PC-9 (cell line): ENCODE measurements at regions of chr6 and their contacts with region 1.

Region 1: DNA sequence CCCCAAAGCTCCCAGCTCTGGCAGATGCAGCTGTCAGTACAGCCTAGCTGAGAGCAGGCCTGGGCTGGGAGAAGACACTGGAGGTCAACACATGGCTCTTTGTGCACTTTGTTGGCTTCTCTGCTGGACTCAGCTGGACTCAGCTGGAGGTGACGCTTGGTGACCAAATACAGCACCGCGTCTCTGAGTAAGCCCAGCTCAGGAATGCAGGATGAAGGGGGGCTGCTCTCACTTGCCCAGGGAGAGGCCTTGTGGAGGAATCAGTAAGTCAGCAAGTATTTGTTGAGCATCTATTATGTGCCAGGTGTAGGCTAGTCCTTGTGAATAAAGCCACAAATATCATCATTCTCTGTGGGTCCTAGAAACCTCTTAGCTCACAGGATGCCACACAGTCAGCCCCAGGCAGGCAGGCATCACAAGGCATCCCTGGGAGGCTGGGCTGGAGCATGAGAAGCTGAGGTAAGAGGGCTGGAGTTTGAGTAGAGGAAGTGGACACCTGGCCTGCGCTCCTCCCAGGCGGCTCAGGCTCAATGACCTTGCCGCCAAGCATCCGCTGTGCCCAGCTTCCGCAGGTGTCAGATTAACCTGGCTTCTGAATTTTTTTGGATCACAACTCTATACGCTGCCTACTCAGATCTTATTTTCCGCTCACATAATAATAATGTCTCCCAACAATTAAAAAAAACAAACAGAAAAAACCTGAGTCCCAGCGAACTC is 95.4 kb downstream of the TMEM170B start:
- DNase-seq: peak in 1 of 2 experiments; percentile 40
- H3K4me3 ChIP-seq: no peak overlapping the region
- H3K27ac ChIP-seq: peak overlapping the region; percentile 18
- H3K4me1 ChIP-seq: peaks cover 9% of the 10 kb centered on the region
- H3K27me3 ChIP-seq: no peaks in the 10 kb centered on the region
- CTCF ChIP-seq: no peak

Region 2: GRCh38 chr6:11598684-11599083 is 34.3 kb before region 1 on chr6:
- CTCF ChIA-PET with region 1: interaction called, 3 read pairs
- POLR2A ChIA-PET with region 1: no interaction called
- intact Hi-C with region 1: loop called (anchors 1 kb)
- DNase-seq: peak; percentile 66 to 98
- H3K4me3 ChIP-seq: no peak overlapping the region
- H3K27ac ChIP-seq: peak overlapping the region; percentile 26
- H3K4me1 ChIP-seq: peaks cover 39% of the 10 kb centered on the region
- H3K27me3 ChIP-seq: no peaks in the 10 kb centered on the region
- CTCF ChIP-seq: no peak

Region 3: DNA sequence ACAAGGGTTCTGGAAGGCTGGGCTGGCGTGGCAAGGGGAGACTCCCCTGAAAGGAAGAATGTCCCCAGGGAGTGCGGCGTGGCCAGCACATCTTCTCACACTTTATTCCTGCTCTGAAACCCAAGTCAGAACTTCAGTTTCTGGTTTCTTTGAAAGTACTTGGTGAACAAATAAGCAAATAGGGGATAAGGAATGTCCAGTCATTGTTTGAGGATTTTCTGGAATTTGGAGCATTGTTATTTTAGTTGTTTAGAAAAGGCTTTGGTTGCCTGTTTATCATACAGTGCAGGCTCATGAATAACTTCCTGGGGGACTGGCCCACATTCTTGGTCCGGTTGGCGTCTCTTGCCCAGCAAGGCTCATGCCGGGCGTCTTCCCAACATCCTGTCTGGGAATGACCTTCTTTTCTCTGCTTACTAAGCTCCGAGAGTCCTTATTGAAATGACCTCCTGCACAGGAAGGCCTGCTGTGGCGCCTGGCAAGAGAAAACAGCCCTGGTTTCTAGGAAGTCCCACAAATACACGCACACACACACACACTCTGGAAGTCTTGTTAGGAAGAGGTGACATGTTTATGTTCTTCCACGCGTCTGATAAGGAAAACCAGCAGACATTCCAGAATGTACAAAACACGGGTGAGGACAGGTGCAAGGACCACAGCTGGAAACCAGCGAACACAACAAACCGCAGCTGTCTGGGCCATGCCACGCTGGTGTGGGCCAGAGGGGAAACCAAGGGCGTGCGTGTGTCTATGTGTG is 23.5 kb before region 1 on chr6:
- CTCF ChIA-PET with region 1: no interaction called
- POLR2A ChIA-PET with region 1: no interaction called
- intact Hi-C with region 1: loop called (anchors 1 kb)
- DNase-seq: peak; percentile 77 to 80
- H3K4me3 ChIP-seq: no peak overlapping the region
- H3K27ac ChIP-seq: no peak overlapping the region
- H3K4me1 ChIP-seq: peaks cover 24% of the 10 kb centered on the region
- H3K27me3 ChIP-seq: no peaks in the 10 kb centered on the region
- CTCF ChIP-seq: no peak

Region 4: GRCh38 chr6:12348530-12349511 is 715.9 kb after region 1 on chr6:
- CTCF ChIA-PET with region 1: no interaction called
- POLR2A ChIA-PET with region 1: interaction called, 20 read pairs
- intact Hi-C with region 1: no loop called
- DNase-seq: peak; percentile 80 to 97
- H3K4me3 ChIP-seq: no peak overlapping the region
- H3K27ac ChIP-seq: peak overlapping the region; percentile 28
- H3K4me1 ChIP-seq: peaks cover 21% of the 10 kb centered on the region
- H3K27me3 ChIP-seq: no peaks in the 10 kb centered on the region
- CTCF ChIP-seq: no peak